OCI-LY7 (cell line): ENCODE measurements at regions of chr6 and their contacts with region 1.

Region 1: GRCh38 chr6:217048-217659 is 75.1 kb upstream of the DUSP22 start:
- DNase-seq: peak; percentile 80
- H3K4me3 ChIP-seq: no peak overlapping the region
- H3K27ac ChIP-seq: peak overlapping the region; percentile 91
- H3K4me1 ChIP-seq: peaks cover 70% of the 10 kb centered on the region
- CTCF ChIP-seq: peak; percentile 95

Region 2: DNA sequence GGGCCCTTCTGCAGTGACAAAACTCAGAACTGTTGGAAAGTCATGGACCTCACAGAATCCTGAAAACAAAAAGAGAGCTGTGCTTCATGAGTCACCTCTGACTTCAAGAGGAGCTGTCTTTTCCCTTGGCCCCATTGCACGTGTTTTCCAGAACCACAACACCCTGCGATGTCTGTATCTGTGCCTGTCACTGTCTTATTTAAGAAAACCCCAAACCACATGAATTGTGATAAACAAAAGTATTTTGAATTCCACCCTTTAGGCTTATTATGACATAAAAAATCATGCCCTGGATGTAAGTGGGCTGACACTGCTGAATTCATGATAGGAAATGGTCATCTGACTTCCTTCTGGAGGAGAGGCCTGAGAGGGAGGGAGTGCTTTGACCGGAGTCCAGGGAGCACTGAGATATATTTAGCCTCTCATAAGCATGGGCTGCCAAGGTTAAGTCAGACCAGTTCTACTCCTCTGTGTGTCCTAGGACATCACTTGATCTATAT is 21.2 kb before region 1 on chr6:
- CTCF ChIA-PET with region 1: interaction called, 8 read pairs
- POLR2A ChIA-PET with region 1: interaction called, 15 read pairs
- intact Hi-C with region 1: no loop called
- DNase-seq: no peak
- H3K4me3 ChIP-seq: no peak overlapping the region
- H3K27ac ChIP-seq: no peak overlapping the region
- H3K4me1 ChIP-seq: peaks cover 30% of the 10 kb centered on the region
- CTCF ChIP-seq: no peak

Region 3: DNA sequence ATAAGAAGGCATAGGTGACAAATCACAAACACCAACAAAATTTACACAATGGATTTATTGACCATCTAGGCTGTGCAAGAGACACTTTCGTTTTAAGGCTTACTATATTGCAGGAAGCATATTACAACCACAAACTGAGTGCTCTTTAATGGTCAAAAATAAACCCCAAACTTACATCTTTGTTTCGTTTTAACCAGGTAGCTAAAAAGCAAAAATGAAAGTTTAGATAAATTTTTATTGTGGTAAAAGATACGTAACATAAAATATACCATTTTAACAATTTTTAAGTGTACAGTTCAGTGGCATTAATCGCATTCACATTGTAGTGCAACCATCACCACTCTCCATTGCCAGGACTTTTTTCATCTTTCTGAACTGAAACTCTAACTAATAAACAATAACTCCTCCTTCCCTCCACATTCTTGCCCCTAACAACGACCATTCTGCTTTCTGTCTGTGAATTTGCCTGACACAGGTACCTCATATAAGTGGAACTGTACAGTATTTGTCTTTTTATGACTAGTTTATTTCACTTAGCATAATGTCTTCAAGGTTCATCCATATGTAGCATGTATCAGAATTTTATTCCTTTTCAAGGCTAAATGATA is 42.9 kb after region 1 on chr6:
- CTCF ChIA-PET with region 1: interaction called, 5 read pairs
- POLR2A ChIA-PET with region 1: interaction called, 13 read pairs
- intact Hi-C with region 1: no loop called
- DNase-seq: no peak
- H3K4me3 ChIP-seq: peak overlapping the region; percentile 20
- H3K27ac ChIP-seq: no peak overlapping the region
- H3K4me1 ChIP-seq: peaks cover 35% of the 10 kb centered on the region
- CTCF ChIP-seq: no peak

Region 4: GRCh38 chr6:291697-292505 is 74.7 kb after region 1 on chr6 and contains the start of gene DUSP22:
- CTCF ChIA-PET with region 1: interaction called, 16 read pairs
- POLR2A ChIA-PET with region 1: interaction called, 13 read pairs
- intact Hi-C with region 1: loop called (anchors 1 kb)
- DNase-seq: peak; percentile 87
- H3K4me3 ChIP-seq: peak within 1 kb of the TSS; percentile 80
- H3K27ac ChIP-seq: peak within 1 kb of the TSS; percentile 88
- H3K4me1 ChIP-seq: peaks cover 65% of the 10 kb centered on the region
- CTCF ChIP-seq: no peak
- total RNA-seq, gene DUSP22: 133 and 149 TPM in 2 replicates

Region 5: GRCh38 chr6:328136-328670 is 111.0 kb after region 1 on chr6:
- CTCF ChIA-PET with region 1: interaction called, 17 read pairs
- POLR2A ChIA-PET with region 1: interaction called, 27 read pairs
- intact Hi-C with region 1: loop called (anchors 1 kb)
- DNase-seq: peak; percentile 90
- H3K4me3 ChIP-seq: peak overlapping the region; percentile 58
- H3K27ac ChIP-seq: peak overlapping the region; percentile 98
- H3K4me1 ChIP-seq: peaks cover 98% of the 10 kb centered on the region
- CTCF ChIP-seq: no peak

Region 6: DNA sequence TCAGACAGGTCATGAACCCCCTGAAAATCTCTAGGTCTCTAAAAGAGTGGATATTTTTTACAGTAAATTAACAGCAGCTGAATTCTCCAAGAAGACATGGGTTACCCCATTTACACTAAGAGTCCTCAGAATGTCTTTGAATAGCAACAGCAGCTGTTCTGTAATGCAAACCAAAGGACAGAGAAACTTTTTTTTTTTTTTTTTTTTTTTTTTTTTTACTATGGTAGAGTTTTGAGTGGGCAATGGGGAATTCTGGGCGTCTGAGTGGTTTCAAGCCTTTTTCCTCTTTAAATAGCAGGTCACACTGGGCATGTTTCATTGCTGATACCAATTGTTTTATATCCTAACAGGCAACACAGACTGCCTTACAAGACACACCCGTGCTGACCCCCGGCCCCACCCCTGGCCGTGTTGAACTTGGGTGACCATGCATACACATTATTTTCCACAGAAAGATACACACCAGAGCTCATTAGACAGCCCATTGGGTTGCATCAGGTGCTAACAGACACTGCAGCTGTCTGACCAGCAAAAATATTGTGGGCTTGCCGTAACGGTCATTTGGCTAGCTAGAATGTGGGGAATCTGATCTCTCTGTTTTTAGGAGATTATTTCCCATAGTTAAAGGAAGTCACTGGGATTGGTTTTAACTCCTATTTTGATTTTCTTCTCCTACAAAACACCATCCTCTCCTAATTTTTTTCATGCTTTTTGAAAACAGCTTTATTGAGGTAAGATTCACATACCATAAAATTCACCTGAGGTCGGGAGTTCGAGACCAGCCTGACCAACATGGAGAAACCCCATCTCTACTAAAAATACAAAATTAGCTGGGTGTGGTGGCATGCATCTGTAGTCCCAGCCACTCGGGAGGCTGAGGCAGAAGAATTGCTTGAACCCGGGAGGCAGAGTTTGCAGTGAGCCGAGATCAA is 147.7 kb after region 1 on chr6:
- CTCF ChIA-PET with region 1: interaction called, 5 read pairs
- POLR2A ChIA-PET with region 1: interaction called, 9 read pairs
- intact Hi-C with region 1: loop called (anchors 2 kb)
- DNase-seq: peak; percentile 97
- H3K4me3 ChIP-seq: peak overlapping the region; percentile 45
- H3K27ac ChIP-seq: peak overlapping the region; percentile 95
- H3K4me1 ChIP-seq: peaks cover 84% of the 10 kb centered on the region
- CTCF ChIP-seq: no peak